Activated CD4-positive, alpha-beta T cell treated with anti-CD3 and anti-CD28 coated beads, Interleukin-2, amount 10 ng/mL, durations not matched to agents 24 days and 14 days (primary cell): ENCODE measurements at regions of chr2 and their contacts with region 1.

Region 1: DNA sequence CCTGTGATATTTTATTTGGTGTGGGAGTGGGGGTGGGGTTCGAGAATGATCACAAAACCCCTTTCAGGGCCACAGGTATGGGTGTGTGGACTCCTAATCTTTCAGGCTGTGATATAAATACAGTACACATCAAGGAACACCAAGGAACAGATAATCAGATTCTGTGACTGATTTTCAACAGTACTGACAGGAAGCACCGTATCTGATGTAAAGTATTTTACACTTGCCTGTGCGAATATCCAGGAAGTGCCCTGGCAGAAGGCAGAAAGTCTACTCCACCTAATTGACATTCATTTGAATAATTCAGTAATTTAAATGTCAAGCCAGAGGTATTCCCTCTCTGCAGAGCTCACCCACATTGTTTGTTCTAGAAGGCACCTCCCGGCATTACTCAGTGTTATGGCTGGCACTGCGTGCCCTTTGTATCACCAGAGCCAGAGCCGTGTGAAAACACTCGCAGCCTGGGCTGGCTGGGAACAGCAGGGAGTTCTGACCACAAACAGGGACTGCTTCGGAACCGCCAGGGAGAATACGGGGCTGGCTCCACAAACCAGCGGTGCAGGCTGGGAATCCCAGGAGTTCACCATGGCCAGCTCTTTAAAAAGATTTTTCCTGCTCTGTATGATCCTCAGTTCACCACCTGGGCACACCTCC is 91.8 kb downstream of the ACVR1 start:
- DNase-seq: peak; percentile 67
- H3K4me3 Mint-ChIP-seq: peak overlapping the region; percentile 47
- H3K27ac Mint-ChIP-seq: peak overlapping the region; percentile 78
- H3K4me1 Mint-ChIP-seq: peaks cover 70% of the 10 kb centered on the region
- H3K27me3 Mint-ChIP-seq: no peaks in the 10 kb centered on the region

Region 2: GRCh38 chr2:157492189-157492773 is 292.0 kb before region 1 on chr2:
- intact Hi-C with region 1: loop called (anchors 5 kb)
- DNase-seq: peak; percentile 91
- H3K4me3 Mint-ChIP-seq: no peak overlapping the region
- H3K27ac Mint-ChIP-seq: no peak overlapping the region
- H3K4me1 Mint-ChIP-seq: peaks cover 56% of the 10 kb centered on the region
- H3K27me3 Mint-ChIP-seq: no peaks in the 10 kb centered on the region

Region 3: DNA sequence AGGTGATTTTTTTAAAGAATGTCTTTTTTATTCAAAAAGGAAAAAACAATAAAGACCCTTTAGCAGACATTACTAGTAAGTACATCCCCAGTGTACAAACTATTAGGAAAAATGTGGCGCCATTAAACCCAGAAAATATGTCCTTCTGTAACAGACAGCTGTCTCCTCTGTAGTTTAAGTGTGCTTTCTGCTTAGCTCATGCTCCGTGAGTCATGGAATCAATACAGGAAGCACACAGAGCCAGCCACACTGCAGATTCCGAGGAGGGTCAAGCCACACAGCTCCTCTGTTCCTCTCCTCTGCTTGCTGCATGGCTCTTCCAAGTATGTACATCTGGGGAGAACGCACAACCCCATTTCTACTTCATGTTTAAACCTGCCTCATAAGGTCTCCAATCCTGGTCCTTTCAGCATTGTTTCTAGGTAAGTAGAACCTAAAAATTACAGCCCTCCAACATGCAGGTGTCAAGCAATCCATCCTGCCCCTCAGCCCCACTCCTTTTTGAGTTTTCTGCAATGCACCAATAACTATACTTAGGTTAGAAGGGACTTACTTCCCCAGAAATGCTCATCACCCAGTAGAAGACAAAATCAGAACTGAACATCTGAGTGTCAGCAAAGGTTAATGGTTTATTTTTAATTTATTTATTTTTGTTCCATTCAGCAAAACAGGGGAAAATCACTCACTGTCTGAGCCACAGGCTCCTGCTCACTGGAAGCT is 54.3 kb after region 1 on chr2:
- intact Hi-C with region 1: loop called (anchors 5 kb)
- DNase-seq: peak; percentile 72
- H3K4me3 Mint-ChIP-seq: peak overlapping the region; percentile 61
- H3K27ac Mint-ChIP-seq: peak overlapping the region; percentile 83
- H3K4me1 Mint-ChIP-seq: peaks cover 49% of the 10 kb centered on the region
- H3K27me3 Mint-ChIP-seq: no peaks in the 10 kb centered on the region

Region 4: DNA sequence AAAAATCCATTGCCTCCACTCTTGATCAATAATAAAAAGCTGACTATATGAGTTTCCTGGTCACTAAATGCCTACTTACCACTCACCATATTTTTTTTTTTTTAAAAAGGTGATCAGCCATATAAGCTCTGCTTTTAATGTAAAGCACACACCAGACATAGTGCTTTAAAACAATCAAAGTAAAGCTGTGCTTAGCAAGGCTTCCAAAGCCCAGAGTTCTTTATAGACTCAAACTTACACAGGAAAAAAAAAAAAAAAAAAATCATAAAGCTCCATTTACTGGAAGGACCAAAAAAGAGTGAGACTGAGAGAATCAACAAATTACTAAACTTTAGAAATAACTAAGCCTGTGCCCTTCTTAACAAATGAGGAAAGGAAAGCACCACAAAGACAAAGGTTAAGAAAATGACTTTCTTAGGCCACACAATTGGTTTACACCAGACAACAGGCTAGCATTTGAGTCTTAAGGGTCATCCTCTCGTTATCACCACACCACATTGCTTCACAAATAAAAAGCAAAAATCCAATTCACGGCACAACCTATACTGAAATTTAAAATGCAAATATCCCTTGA is 80.6 kb after region 1 on chr2:
- intact Hi-C with region 1: loop called (anchors 1 kb)
- DNase-seq: no peak
- H3K4me3 Mint-ChIP-seq: peak overlapping the region; percentile 46
- H3K27ac Mint-ChIP-seq: peak overlapping the region; percentile 82
- H3K4me1 Mint-ChIP-seq: peaks cover 35% of the 10 kb centered on the region
- H3K27me3 Mint-ChIP-seq: no peaks in the 10 kb centered on the region